CD14-positive monocyte (primary cell): ENCODE measurements at regions of chr3 and their contacts with region 1.

Region 1: GRCh38 chr3:132507657-132508056 is 89.4 kb upstream of the ACKR4 start:
- DNase-seq: no peak
- H3K4me3 ChIP-seq: no peak overlapping the region
- H3K4me3 Mint-ChIP-seq: no peak overlapping the region
- H3K27ac ChIP-seq: no peak overlapping the region
- H3K27ac Mint-ChIP-seq: peak overlapping the region in 1 of 7 donors; percentile 45
- H3K4me1 ChIP-seq: no peaks in the 10 kb centered on the region
- H3K4me1 Mint-ChIP-seq: no peaks in the 10 kb centered on the region
- H3K27me3 ChIP-seq: no peaks in the 10 kb centered on the region
- H3K27me3 Mint-ChIP-seq: peaks cover 0 to 2% (median 0%) of the 10 kb centered on the region in 3 donors
- CTCF ChIP-seq: no peak

Region 2: GRCh38 chr3:132352541-132353143 is 155.0 kb before region 1 on chr3:
- intact Hi-C with region 1: loop called in 1 of 2 experiments (anchors 10 kb)
- DNase-seq: peak; percentile 34 to 68 (median 58)
- H3K4me3 ChIP-seq: no peak overlapping the region
- H3K4me3 Mint-ChIP-seq: no peak overlapping the region
- H3K27ac ChIP-seq: no peak overlapping the region
- H3K27ac Mint-ChIP-seq: no peak overlapping the region
- H3K4me1 ChIP-seq: no peaks in the 10 kb centered on the region
- H3K4me1 Mint-ChIP-seq: peaks cover 2% of the 10 kb centered on the region
- H3K27me3 ChIP-seq: no peaks in the 10 kb centered on the region
- H3K27me3 Mint-ChIP-seq: no peaks in the 10 kb centered on the region
- CTCF ChIP-seq: peak; percentile 86

Region 3: DNA sequence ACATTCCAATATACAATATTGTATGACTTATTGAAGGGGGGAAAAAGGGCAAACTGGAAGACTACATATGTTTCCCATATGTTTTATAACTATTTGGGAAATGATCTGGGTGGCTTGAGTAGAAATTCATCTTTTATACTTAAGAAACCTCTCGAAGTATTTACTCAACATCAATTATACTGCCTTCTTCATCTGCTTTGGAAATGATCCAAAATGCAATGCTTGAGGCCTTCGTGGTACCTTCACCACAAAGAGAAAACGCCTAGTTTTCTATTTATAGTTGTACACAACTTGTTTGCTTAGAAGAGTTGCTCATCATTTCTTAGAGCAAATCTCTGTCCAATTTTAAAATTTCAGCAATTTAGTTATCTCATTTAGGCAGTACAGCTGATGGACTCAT is 108.2 kb after region 1 on chr3:
- intact Hi-C with region 1: no loop called
- DNase-seq: no peak
- H3K4me3 ChIP-seq: no peak overlapping the region
- H3K4me3 Mint-ChIP-seq: no peak overlapping the region
- H3K27ac ChIP-seq: no peak overlapping the region
- H3K27ac Mint-ChIP-seq: no peak overlapping the region
- H3K4me1 ChIP-seq: no peaks in the 10 kb centered on the region
- H3K4me1 Mint-ChIP-seq: peaks cover 6% of the 10 kb centered on the region
- H3K27me3 ChIP-seq: no peaks in the 10 kb centered on the region
- H3K27me3 Mint-ChIP-seq: peaks cover 0 to 2% (median 0%) of the 10 kb centered on the region in 3 donors
- CTCF ChIP-seq: no peak